Mammary epithelial cell (primary cell): ENCODE measurements at regions of chr16 and their contacts with region 1.

Region 1: DNA sequence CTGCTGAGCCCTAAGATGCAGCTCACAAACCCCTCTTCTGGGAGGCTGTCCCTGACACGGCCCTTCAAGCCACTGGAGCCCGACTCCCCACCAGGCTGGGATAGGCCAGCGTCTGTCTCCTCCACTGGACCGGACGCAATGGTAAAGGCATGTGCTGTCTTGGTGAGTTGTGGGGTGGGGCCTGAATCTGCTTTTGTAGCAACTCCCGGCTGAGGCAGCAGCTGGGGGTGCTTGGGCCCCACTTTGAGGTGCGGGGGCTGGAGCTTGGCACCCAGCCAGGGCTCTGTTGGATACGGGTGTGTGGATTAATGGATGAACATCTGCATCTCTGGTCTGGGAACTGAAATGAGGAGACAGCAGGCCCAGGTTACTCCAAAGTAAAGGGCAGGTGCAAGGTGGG is 3.5 kb upstream of the NLRC3 start:
- DNase-seq: no peak
- H3K4me3 ChIP-seq: no peak overlapping the region
- H3K27ac ChIP-seq: no peak overlapping the region
- H3K4me1 ChIP-seq: no peaks in the 10 kb centered on the region
- H3K27me3 ChIP-seq: no peaks in the 10 kb centered on the region
- CTCF ChIP-seq: no peak

Region 2: DNA sequence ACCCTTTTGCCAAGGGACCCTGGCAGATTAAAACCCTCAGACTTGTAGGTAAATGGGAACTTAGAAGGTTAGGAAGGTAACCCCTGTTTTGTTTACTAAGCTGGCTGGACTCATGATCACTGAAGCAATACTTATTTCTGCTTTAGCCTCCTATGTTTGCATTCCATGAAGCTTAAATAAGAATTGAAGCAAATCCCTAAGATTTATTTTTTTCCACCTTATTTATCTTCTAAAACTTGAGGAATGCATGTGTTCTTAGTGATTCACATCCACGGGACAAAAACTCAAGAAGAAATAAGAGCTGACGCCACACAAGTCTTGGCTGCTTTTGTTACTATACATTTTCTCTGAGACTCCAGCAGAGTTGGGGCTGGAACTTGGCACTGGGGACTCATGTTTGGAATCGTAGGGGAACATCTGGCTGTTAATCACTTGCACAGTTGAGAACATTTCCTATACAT is 44.4 kb before region 1 on chr16:
- CTCF ChIA-PET with region 1: no interaction called
- dilution Hi-C with region 1: no loop called
- in situ Hi-C with region 1: no loop called
- intact Hi-C with region 1: loop called (anchors 10 kb)
- DNase-seq: no peak
- H3K4me3 ChIP-seq: no peak overlapping the region
- H3K27ac ChIP-seq: no peak overlapping the region
- H3K4me1 ChIP-seq: no peaks in the 10 kb centered on the region
- H3K27me3 ChIP-seq: no peaks in the 10 kb centered on the region
- CTCF ChIP-seq: no peak